Activated CD4-positive, alpha-beta T cell treated with anti-CD3 and anti-CD28 coated beads, Interleukin-2, amount 10 ng/mL, durations not matched to agents 24 days and 14 days (primary cell): ENCODE measurements at regions of chr18 and their contacts with region 1.

Region 1: DNA sequence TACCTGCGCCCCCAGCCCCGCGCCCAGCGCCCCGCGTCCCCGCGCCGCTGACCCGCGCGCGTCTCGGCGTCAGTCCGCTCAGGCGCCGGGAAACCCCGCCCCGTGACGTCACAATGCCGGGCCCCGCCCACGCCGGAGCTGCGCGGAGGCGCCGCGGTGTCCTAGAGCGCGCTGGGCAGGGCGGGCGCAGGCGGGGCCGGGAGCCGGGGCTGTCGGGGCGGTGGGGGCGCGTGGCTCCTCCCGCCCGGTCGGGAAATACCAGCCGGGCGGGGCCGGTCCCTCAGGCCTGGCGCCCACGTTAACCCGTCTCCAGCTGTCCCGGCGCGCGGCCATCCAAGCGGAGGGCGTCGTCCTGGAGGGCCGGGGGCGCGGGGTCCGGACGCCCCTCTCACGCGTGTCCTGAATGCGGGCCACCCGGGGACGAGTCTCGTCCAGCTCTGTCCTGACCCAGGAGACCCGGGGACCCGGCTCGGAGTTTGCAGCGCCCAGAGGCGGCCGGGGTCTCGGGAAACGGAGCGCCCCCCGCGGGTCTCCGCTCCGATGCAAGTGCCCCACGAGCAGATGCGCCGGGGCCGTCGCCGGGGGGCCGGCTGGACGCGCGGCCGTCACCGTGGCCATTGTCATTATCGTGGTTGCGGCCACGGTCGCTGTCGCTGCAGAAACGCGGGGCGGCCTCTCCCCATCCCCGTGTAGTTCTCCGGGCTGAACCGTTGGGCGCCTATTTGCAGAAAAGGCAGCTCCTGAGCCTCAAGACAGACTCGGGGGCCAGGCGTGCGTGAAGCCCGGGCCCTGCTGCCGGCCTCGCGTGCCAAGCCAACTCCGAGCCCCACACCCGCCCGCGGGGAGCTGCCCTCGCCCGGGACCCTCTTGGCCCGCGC is at the start of gene SLC66A2:
- DNase-seq: peak; percentile 98
- H3K4me3 Mint-ChIP-seq: peak within 1 kb of the TSS; percentile 88
- H3K27ac Mint-ChIP-seq: peak within 1 kb of the TSS; percentile 79
- H3K4me1 Mint-ChIP-seq: peaks cover 29% of the 10 kb centered on the region
- H3K27me3 Mint-ChIP-seq: peaks cover 3% of the 10 kb centered on the region
- total RNA-seq, gene SLC66A2: 45.6 and 46.5 TPM in 2 replicates

Region 2: DNA sequence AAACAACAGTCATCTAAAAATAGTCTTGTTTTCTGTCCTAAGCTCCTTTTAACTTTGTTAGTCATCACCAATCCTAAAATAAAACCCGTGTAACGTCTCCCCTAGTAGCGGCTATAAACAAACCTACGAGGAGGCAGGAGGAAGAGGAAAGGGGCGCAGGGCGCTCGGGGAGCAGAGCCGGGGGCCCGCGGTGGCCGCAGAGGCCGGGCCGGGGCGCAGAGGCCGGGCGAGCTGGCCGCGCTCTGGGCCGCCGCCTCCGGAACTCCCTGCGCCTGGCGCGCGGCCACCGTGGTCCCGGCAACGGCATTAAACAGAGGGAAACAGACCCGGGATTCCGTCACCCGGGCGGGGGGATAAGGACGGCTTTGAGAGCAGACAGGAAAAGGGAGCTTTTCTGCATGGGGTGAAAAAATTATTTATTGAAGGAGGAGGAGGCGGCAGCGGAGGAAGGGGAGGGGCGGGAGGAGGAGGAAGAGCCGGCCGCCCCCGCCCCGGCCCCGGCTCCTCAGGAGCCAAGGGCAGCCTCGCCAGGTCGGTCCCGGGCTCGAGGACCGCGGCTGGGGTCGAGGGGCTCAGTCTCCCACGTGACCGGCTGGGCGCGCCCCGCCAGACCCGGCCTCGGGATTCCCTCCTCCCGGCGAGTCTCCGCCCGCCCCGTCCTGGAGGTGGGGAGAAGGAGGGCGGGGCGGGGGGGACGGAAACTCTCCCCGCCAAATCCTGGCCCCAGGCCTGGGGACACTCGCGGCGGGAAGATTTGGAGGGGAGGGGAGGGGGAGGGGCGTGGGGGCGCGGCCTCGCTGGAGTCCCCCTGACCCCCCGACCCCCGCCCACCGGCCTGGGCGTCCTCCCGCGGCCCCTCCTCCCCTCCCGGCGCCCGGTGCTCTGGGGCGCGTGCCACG is 557.9 kb before region 1 on chr18:
- intact Hi-C with region 1: loop called (anchors 10 kb)
- DNase-seq: peak; percentile 83
- H3K4me3 Mint-ChIP-seq: peak overlapping the region; percentile 87
- H3K27ac Mint-ChIP-seq: peak overlapping the region; percentile 92
- H3K4me1 Mint-ChIP-seq: peaks cover 19% of the 10 kb centered on the region
- H3K27me3 Mint-ChIP-seq: peaks cover 27% of the 10 kb centered on the region

Region 3: DNA sequence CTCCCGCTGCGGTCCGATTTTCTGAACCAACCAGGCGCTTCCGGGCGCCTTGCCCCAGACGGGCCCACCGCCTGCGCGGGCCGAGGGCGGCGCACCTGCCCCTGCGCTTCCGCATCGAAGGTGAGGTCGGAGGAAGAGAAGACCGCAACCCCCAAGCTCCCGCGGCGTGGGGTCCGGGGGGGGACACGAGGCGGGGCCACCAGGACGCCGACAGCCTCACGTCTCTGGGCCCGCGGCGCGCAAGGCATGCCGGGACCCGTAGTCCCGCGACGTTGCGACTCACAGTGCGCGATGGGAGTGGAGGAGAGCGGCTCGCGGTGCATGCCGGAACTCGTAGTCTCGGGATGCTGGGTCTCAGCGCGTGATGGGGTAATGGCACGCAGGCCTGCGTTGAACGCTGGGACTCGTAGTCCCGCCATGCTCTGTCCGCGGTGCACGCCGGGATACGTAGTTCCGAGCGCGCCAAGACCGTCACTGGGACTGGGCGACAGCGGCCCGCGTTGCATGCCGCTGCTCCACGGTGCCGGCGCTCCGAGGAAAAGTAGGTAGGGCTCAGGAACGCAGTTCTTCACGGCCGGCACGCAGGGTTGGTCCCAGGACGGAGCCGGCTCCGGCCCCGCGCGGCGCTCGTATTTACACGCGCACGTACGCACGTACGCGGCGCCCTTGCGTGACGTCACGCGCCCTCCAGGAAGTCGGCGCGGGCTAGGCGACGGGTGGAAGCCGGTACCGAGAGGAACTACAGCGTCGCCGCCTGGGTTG is 272.5 kb before region 1 on chr18 and contains the start of gene CTDP1:
- intact Hi-C with region 1: loop called (anchors 5 kb)
- DNase-seq: peak; percentile 99
- H3K4me3 Mint-ChIP-seq: peak within 1 kb of the TSS; percentile 93
- H3K27ac Mint-ChIP-seq: peak within 1 kb of the TSS; percentile 99
- H3K4me1 Mint-ChIP-seq: peaks cover 56% of the 10 kb centered on the region
- H3K27me3 Mint-ChIP-seq: peaks cover 4% of the 10 kb centered on the region
- total RNA-seq, gene CTDP1: 41.2 and 45.5 TPM in 2 replicates

Region 4: GRCh38 chr18:79798999-79799370 is 152.8 kb before region 1 on chr18:
- intact Hi-C with region 1: no loop called
- DNase-seq: no peak
- H3K4me3 Mint-ChIP-seq: no peak overlapping the region
- H3K27ac Mint-ChIP-seq: no peak overlapping the region
- H3K4me1 Mint-ChIP-seq: peaks cover 6% of the 10 kb centered on the region
- H3K27me3 Mint-ChIP-seq: peaks cover 36% of the 10 kb centered on the region

Region 5: DNA sequence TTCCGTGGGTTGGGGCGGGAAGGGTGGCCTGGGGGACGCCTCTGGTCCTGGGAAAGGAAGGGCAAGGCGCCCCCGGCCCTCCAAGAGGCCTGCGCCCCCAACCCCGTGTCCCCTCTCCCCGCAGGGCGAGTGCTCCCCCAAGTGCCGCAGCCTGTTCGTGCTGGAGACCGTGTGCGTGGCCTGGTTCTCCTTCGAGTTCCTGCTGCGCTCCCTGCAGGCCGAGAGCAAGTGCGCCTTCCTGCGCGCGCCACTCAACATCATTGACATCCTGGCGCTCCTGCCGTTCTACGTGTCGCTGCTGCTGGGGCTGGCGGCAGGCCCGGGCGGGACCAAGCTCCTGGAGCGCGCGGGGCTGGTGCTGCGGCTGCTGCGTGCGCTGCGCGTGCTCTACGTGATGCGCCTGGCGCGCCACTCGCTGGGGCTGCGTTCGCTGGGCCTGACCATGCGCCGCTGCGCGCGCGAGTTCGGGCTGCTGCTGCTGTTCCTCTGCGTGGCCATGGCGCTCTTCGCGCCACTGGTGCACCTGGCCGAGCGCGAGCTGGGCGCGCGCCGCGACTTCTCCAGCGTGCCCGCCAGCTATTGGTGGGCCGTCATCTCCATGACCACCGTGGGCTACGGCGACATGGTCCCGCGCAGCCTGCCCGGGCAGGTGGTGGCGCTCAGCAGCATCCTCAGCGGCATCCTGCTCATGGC is 52.8 kb before region 1 on chr18:
- intact Hi-C with region 1: loop called (anchors 10 kb)
- DNase-seq: no peak
- H3K4me3 Mint-ChIP-seq: no peak overlapping the region
- H3K27ac Mint-ChIP-seq: no peak overlapping the region
- H3K4me1 Mint-ChIP-seq: no peaks in the 10 kb centered on the region
- H3K27me3 Mint-ChIP-seq: no peaks in the 10 kb centered on the region

Region 6: DNA sequence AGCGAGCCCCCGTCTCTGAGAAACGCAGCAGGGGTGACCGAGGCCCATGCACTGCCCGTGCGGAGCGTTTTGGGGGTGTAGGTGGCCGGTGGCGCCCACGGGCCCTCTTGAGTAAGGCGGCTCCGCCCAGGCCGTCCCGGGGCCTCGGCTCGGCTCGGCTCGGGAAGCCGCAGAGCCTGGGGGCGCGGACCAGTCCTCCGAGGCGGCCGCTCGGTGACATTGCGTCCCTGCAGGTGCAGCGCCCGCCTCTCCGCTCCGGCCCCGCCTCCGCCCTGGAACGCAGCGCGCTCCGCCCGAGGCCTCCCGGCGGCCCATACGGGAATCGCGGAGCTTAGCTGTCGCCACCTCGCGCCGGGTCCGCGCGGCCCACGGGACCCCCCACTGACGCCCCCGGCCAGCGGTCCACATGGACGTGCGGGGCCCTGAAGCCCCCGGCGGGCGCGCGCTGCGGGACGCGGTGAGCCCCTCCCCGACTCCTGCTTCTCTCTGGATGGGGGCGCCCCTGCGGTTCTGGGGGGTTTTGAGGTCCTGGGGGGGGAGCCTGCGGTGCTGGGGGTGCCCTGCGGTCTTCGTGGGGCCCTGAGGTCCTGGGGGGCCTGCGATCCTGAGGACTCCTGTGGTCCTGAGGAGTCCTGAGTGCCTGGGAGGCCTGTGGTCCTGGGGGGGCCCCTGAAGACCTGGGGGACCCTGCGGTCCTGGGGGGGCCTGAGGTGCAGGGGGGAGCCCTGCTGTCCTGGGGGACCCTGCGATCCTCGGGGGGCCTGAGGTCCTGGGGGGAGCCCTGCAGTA is 12.7 kb after region 1 on chr18 and contains the start of gene HSBP1L1:
- intact Hi-C with region 1: loop called (anchors 1 kb)
- DNase-seq: peak; percentile 94
- H3K4me3 Mint-ChIP-seq: peak within 1 kb of the TSS; percentile 82
- H3K27ac Mint-ChIP-seq: peak within 1 kb of the TSS; percentile 84
- H3K4me1 Mint-ChIP-seq: peaks cover 31% of the 10 kb centered on the region
- H3K27me3 Mint-ChIP-seq: peaks cover 3% of the 10 kb centered on the region
- total RNA-seq, gene HSBP1L1: 6.8 and 8.1 TPM in 2 replicates

Region 7: DNA sequence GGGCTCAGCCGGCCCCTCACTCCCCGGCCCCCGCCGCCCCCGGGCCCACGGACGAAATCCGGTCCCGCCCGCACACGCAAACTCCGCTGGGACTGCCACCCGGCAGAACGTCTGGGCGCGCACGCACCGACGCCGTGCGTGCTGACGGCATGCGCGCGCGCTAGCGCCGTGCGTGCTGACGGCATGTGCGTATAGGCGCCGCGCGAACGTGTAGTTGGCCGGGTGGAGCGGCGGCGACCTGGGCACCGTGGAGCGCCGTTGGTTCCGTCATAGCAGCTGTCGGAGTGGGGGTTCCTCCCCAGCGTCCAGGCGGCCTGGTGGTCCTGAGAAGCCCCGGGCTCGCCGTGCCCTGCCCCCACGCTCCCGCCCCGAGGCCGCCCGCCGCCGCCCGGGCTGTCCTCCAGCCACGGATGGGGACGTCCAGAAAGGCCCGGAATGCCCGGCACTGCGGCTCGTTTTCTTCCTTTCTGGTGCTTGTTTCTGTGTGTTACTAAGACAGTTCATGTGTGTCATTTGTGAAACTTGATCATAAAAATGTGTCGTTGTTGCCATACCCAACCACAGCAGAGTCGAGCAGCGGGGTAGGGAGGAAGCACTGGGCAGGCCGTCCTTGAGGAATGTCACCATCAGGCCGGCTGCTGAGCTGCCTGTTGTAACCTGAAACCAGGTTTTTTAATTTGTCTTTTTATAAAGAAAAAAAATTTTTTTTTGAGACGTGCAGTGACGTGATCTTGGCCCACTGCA is 36.8 kb after region 1 on chr18 and contains the start of gene TXNL4A:
- intact Hi-C with region 1: loop called (anchors 1 kb)
- DNase-seq: peak; percentile 96
- H3K4me3 Mint-ChIP-seq: peak within 1 kb of the TSS; percentile 88
- H3K27ac Mint-ChIP-seq: peak within 1 kb of the TSS; percentile 94
- H3K4me1 Mint-ChIP-seq: peaks cover 32% of the 10 kb centered on the region
- H3K27me3 Mint-ChIP-seq: no peaks in the 10 kb centered on the region
- total RNA-seq, gene TXNL4A: 198 and 210 TPM in 2 replicates

Region 8: DNA sequence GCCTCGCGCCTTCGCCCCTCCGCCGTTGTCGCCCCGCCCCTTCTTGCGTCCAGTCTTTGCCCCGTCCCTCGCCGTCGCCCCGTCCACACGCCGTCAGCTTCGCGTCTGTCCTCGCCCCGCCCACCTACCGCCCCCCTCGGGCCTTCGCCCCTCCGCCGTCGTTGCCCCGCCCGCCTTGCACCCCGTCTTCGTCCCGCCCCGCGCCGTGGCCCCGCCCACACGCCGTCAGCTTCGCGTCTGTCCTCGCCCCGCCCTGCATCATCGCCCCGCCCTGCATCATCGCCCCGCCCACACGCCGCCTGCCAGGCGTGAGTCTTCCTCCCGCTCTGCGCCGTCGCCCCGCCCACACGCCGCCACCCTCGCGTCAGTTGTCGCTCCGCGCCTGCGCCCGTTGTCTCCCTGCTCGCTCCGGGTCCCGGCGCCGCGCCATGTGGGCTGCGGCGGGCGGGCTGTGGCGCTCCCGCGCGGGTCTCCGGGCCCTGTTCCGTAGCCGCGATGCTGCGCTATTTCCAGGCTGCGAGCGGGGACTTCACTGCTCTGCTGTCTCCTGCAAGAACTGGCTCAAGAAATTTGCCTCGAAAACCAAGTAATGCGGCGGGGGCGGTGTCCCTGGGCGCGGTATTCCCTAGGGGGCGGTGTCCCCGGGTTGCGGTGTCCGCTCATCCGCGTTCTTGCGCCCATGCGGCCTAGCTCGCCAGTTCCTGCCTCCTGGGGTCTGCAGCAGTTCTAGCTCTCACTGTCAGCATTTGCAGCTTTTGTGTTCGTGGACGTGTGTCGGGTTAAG is 82.4 kb after region 1 on chr18 and contains the start of gene RBFA:
- intact Hi-C with region 1: loop called (anchors 1 kb)
- DNase-seq: peak; percentile 99
- H3K4me3 Mint-ChIP-seq: peak within 1 kb of the TSS; percentile 94
- H3K27ac Mint-ChIP-seq: peak within 1 kb of the TSS; percentile 97
- H3K4me1 Mint-ChIP-seq: peaks cover 30% of the 10 kb centered on the region
- H3K27me3 Mint-ChIP-seq: peaks cover 4% of the 10 kb centered on the region
- total RNA-seq, gene RBFA: 46.0 and 49.9 TPM in 2 replicates

Region 9: DNA sequence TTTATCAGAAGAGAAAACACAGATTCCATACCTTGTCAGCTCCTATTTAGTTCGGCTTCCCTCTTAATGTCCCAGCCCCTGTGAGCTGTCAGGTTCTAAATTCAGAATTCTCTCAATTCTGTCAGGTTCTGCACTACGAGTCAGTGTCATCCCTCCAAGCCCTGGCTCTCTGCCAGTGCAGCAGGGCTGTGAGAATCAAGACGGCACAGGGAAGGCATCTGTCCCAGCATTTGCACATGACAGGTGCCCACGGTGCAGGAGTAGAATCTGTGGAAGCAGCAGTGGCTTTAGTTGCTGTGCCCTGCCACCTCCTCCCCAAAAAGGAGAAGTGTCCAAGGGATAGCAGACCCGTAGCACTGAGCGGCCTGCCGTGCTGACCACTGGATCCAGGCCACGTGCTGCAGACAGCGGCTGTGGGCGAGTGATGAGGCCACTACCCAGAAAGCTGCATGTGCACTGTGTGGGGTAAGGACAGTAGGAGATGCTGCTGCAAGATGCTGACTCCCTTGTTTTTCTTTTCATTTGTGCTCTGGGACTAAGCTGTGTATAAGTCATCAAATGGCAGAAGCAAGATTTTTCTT is 95.2 kb after region 1 on chr18:
- intact Hi-C with region 1: no loop called
- DNase-seq: no peak
- H3K4me3 Mint-ChIP-seq: no peak overlapping the region
- H3K27ac Mint-ChIP-seq: no peak overlapping the region
- H3K4me1 Mint-ChIP-seq: no peaks in the 10 kb centered on the region
- H3K27me3 Mint-ChIP-seq: no peaks in the 10 kb centered on the region

Region 10: DNA sequence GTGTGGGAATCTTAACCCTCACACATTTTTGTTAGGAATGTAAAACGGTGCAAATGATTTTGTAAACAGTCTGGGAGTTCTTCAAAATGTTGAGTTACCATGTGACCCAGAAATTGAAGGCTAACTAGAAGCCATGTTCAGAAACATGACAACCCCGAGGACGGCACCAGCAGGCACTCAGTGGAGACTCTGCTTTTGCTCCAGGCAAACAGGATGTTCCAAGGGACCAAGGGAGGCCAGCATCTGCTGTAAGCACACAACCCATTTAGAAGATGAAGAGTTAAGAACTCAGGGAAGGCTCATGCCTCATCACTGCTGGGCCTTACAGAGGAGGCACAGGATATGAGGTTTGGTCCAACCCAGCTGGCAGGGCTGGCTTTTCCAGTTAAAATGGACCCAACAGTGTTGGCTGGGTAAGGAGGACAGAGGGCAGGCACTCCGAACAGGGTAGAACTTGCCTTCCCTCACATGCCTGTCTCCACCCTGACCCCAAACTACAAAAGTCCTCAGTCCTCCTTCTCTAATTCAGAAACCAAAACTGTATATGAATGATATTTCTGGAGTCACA is 271.8 kb after region 1 on chr18:
- intact Hi-C with region 1: no loop called
- DNase-seq: no peak
- H3K4me3 Mint-ChIP-seq: no peak overlapping the region
- H3K27ac Mint-ChIP-seq: no peak overlapping the region
- H3K4me1 Mint-ChIP-seq: no peaks in the 10 kb centered on the region
- H3K27me3 Mint-ChIP-seq: peaks cover 4% of the 10 kb centered on the region